ENCODE measurements at regions of chr19 and their contacts with region 1.

Region 1: GRCh38 chr19:41255171-41255570 is 9.0 kb upstream of the HNRNPUL1 start:
- DNase-seq: no peak
- H3K4me3 ChIP-seq: no peak overlapping the region
- H3K27ac ChIP-seq: no peak overlapping the region
- H3K4me1 ChIP-seq: no peaks in the 10 kb centered on the region
- H3K27me3 ChIP-seq: no peaks in the 10 kb centered on the region
- CTCF ChIP-seq: no peak

Region 2: GRCh38 chr19:41192574-41193429 is 62.4 kb before region 1 on chr19 and contains the start of gene CYP2S1:
- CTCF ChIA-PET with region 1: no interaction called
- dilution Hi-C with region 1: no loop called
- in situ Hi-C with region 1: no loop called
- intact Hi-C with region 1: no loop called
- DNase-seq: peak; percentile 28
- H3K4me3 ChIP-seq: peak within 1 kb of the TSS; percentile 35 to 52 (median 48)
- H3K27ac ChIP-seq: no peak within 1 kb of the TSS
- H3K4me1 ChIP-seq: peaks cover 16% of the 10 kb centered on the region
- H3K27me3 ChIP-seq: peaks cover 3% of the 10 kb centered on the region
- CTCF ChIP-seq: no peak
- total RNA-seq, gene CYP2S1: 0.50 to 7.1 TPM

Region 3: GRCh38 chr19:41206926-41207750 is 48.0 kb before region 1 on chr19:
- CTCF ChIA-PET with region 1: no interaction called
- dilution Hi-C with region 1: no loop called
- in situ Hi-C with region 1: loop called in 1 of 2 experiments (anchors 5 kb)
- intact Hi-C with region 1: loop called (anchors 1 kb)
- DNase-seq: no peak
- H3K4me3 ChIP-seq: no peak overlapping the region
- H3K27ac ChIP-seq: no peak overlapping the region
- H3K4me1 ChIP-seq: no peaks in the 10 kb centered on the region
- H3K27me3 ChIP-seq: no peaks in the 10 kb centered on the region
- CTCF ChIP-seq: no peak

Measured in mammary epithelial cell (primary cell).